ENCODE measurements at regions of chr10 and their contacts with region 1.

Region 1: GRCh38 chr10:110081911-110082310 is 74.1 kb downstream of the ADD3 start:
- DNase-seq: peak in 5 of 10 donors; percentile 44 to 74 (median 57)
- H3K4me3 ChIP-seq: peak overlapping the region in 11 of 59 donors; percentile 1 to 34 (median 15)
- H3K27ac ChIP-seq: peak overlapping the region; percentile 35 to 96 (median 88)
- H3K27me3 ChIP-seq: no peaks in the 10 kb centered on the region
- CTCF ChIP-seq: peak in 2 of 56 donors; percentile 9 to 10

Region 2: DNA sequence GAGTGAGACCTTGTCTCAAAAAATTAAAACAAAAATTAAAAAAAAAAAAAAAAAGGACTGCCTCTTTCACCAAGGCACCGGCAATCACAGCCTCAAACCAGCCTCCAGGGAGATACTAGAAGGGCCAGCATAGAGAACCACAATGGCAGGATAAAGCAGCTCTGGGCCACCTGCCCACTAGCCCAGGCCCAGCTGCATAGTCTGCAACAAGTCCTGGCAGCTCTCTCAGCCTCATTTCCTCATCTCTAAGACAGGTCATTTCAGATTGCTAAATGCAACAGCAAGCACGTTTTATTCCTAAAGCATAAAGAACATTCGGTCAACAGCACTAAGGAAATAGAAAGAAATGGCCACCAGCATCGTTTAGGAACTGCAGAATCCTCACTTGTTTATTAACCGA is 187.4 kb before region 1 on chr10:
- intact Hi-C with region 1: loop called in 1 of 2 experiments (anchors 1 kb)
- DNase-seq: peak; percentile 36 to 81 (median 74)
- H3K4me3 ChIP-seq: peak overlapping the region in 4 of 59 donors; percentile 5 to 20 (median 19)
- H3K27ac ChIP-seq: peak overlapping the region; percentile 5 to 94 (median 82)
- H3K27me3 ChIP-seq: no peaks in the 10 kb centered on the region
- CTCF ChIP-seq: peak in 1 of 56 donors; percentile 39

Region 3: DNA sequence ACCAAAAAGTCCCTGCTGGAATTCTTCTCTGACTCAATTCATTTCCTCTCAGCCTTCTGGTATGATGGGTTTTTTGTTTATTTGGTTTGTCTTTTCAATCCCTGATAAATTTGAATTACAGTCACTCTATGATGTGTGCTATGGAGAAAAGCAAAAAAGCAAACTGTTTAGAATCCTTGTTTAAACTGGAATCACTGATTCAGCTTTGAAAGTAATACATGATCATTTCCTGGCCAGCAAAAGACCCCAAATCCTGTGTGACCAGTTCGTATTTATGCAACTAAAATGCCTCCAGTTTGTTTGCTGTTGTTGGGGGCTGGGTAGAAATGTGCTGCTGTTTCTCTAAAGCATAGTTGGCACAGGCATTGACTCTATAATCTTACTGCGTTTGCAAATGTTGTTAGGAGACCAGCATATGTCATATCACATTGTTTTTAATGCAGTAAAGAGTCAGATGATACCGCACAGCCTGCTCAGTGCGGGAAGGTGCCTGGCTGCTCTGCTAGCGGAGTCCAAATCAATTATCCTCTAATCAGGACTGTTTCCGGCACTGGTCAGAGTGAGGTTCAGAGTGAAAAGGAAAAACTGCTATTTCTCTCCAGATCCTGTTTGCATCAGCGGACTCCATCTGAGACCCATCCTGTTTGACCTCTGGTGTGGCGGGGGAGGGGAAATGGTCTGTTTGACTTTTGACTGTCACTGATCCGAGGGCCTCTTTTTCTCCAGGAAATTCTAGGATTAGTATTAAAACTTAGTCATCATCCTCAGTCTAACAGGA is 114.8 kb before region 1 on chr10:
- intact Hi-C with region 1: no loop called
- DNase-seq: peak in 1 of 10 donors; percentile 35
- H3K4me3 ChIP-seq: peak overlapping the region in 5 of 59 donors; percentile 1 to 12 (median 5)
- H3K27ac ChIP-seq: peak overlapping the region in 28 of 59 donors; percentile 0 to 83 (median 34)
- H3K27me3 ChIP-seq: no peaks in the 10 kb centered on the region
- CTCF ChIP-seq: no peak

Region 4: DNA sequence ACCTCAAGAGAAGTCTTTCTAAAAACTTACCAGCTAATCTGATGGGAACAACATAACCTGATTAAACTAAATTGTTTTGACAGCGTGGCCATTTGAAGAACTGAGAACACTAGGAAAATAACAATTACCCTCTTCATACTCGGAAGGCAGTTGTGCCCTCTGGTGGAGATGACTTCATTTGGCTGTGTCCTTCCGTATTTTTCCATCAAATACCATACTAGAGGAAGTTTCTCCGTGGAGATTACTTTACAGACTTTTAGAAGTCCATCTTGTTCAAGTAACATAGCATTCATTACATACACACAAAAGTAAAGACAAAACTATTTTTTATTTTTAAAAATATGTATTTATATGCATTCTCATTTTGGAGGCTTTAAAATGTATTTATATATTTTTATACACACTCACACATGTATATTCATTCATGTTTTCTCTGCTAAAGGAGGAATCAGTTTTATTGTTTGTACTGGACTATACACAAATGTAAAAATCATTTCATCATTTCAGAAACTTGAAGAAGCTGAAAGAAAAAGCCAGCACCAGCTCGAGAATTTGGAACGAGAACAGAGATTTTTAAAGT is 197.6 kb after region 1 on chr10:
- intact Hi-C with region 1: no loop called
- DNase-seq: peak in 5 of 10 donors; percentile 50 to 79 (median 60)
- H3K4me3 ChIP-seq: peak overlapping the region in 45 of 59 donors; percentile 1 to 53 (median 21)
- H3K27ac ChIP-seq: peak overlapping the region; percentile 12 to 99 (median 96)
- H3K27me3 ChIP-seq: no peaks in the 10 kb centered on the region
- CTCF ChIP-seq: peak; percentile 70 to 98 (median 89)

Region 5: DNA sequence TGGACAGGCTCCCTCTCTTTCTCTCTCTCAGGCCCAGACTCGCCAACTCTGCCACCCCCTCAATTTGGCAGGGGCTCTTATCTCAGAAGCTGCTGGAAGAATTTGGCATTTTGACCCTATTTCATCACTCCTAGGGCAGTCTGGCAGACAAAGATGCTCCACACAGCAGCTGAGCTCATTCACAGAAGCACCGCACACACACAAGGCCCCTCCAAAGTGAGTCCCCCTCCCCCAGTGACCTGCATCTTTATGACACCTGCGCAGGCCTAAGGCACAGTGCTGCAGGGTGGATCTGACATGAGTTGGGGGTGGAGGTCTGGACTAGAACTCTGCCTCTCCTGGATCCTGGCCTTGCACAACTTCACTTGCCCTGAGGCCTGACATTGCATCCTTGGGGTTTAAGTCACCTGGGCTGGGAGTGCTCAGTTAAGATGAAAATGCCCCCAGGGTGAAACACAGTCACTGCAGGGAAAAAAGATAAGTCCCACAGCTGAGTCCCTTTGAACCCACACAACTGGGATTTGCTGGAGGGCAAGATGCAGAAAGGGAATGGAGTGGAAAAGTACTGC is 374.7 kb after region 1 on chr10:
- intact Hi-C with region 1: no loop called
- DNase-seq: no peak
- H3K4me3 ChIP-seq: no peak overlapping the region
- H3K27ac ChIP-seq: peak overlapping the region in 1 of 59 donors; percentile 89
- H3K27me3 ChIP-seq: no peaks in the 10 kb centered on the region
- CTCF ChIP-seq: no peak